A673 (cell line): ENCODE measurements at regions of chr4 and their contacts with region 1.

Region 1: GRCh38 chr4:99949034-99949998 is 759 bp downstream of the H2AZ1 start:
- DNase-seq: peak; percentile 97
- H3K4me3 ChIP-seq: peak overlapping the region; percentile 92
- H3K27ac ChIP-seq: peak overlapping the region; percentile 95
- H3K4me1 ChIP-seq: peaks cover 20% of the 10 kb centered on the region
- H3K27me3 ChIP-seq: no peaks in the 10 kb centered on the region
- CTCF ChIP-seq: peak; percentile 88

Region 2: DNA sequence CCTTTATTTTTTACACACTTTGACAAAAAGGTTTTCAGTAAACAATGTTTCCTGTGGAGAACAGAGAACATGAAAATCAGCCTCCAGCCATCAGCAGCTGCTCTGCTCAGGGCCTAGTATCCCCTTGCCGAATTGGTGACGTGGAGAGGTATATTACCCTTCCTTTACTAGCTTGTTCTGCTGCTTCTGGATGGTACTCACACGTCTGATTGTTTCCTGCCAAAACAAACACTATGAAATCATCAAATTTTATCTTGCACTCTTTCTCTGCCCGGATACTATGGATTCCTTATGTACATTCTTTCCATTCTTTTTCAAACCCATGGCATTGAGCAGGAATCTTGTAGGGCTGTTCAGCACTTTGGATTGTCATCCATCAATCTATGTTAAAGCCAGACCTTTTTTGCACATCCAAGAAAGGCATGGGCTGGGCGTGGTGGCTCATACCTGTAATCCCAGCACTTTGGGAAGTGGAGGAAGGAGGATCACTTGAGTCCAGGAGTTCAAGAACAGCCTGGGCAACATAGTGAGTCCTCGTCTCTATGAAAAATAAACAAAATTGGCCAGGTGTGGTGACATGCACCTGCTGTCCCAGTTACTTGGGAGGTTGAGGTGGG is 972.5 kb before region 1 on chr4:
- CTCF ChIA-PET with region 1: no interaction called
- POLR2A ChIA-PET with region 1: no interaction called
- intact Hi-C with region 1: no loop called
- DNase-seq: no peak
- H3K4me3 ChIP-seq: no peak overlapping the region
- H3K27ac ChIP-seq: no peak overlapping the region
- H3K4me1 ChIP-seq: no peaks in the 10 kb centered on the region
- H3K27me3 ChIP-seq: no peaks in the 10 kb centered on the region
- CTCF ChIP-seq: no peak

Region 3: DNA sequence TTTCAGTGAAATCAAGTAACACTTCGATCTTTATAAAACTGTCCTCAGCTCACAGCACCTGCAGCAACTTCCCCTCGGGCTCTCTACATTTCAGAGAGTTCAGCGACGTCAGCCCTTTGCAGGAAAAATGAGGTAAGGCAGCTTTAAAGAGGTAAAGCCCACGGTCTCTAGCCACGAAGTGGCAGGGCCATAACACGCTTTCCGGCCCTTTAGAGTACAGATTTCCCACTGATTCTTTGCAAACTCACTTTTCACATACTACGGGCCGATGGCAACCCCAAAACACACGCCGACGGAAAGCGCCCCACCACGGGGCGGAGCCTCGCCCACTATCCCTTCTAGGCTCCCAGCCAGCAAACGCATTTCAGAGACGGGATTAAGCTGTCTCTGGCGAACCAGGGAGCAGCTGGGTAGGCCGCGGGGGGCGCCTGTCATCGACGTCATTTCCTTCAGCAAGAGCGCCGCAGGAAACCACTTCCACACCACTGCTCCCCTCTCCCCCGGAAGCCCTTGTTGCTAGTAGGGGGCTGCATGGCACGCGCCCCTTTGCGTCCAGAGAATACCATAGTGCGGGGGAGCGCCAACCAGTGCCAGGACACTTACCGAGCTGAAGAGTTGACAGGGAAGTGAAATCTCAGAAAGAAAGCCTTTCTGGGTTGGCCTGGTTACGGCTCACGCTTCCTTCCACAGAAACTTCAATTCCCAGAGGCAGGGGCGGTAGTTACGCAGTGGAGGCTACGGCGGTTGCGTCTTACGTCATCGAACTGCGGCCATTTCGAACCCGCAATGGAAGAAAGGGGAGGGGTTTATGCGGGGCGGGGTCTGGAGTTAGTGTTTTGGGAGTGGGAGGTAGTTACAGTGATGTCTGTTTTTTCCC is 385.8 kb before region 1 on chr4 and contains the start of gene TRMT10A:
- CTCF ChIA-PET with region 1: no interaction called
- POLR2A ChIA-PET with region 1: no interaction called
- intact Hi-C with region 1: loop called (anchors 5 kb)
- DNase-seq: peak; percentile 98
- H3K4me3 ChIP-seq: peak within 1 kb of the TSS; percentile 65
- H3K27ac ChIP-seq: peak within 1 kb of the TSS; percentile 99
- H3K4me1 ChIP-seq: no peaks in the 10 kb centered on the region
- H3K27me3 ChIP-seq: no peaks in the 10 kb centered on the region
- CTCF ChIP-seq: no peak
- total RNA-seq, gene TRMT10A: 2.4 and 4.6 TPM in 2 replicates

Region 4: DNA sequence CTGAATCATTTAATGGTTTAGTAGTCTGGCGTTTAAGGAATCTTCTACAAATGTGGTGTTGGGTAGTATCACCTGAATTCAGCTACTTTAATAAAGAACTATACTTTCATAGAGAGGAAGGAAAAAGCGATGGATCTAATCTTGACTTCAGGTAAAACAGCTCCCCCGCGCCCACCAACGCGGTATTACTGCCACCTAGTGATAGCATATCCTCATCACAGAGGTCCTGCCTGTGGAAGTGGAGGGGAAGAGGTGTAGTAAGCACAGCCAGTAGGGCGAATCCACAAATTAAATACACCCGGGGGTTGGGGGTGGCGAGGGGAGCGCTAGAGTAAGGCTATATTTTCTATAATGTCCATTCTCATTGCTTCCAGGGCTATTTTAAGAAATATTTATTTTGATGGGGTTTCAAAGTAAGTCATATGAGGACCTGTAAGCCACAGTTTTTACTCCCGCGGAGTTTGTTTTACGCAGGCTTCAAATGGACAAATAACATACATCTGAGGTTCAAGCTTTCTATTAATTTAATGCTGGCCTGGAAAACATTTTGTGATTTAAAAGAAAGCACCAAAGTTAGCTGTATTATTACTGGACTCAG is 141.0 kb before region 1 on chr4:
- CTCF ChIA-PET with region 1: no interaction called
- POLR2A ChIA-PET with region 1: no interaction called
- intact Hi-C with region 1: loop called (anchors 5 kb)
- DNase-seq: peak; percentile 62
- H3K4me3 ChIP-seq: no peak overlapping the region
- H3K27ac ChIP-seq: no peak overlapping the region
- H3K4me1 ChIP-seq: no peaks in the 10 kb centered on the region
- H3K27me3 ChIP-seq: peaks cover 16% of the 10 kb centered on the region
- CTCF ChIP-seq: peak; percentile 73

Region 5: GRCh38 chr4:100494166-100494825 is 545.0 kb after region 1 on chr4:
- CTCF ChIA-PET with region 1: no interaction called
- POLR2A ChIA-PET with region 1: no interaction called
- intact Hi-C with region 1: loop called (anchors 5 kb)
- DNase-seq: no peak
- H3K4me3 ChIP-seq: no peak overlapping the region
- H3K27ac ChIP-seq: peak overlapping the region; percentile 26
- H3K4me1 ChIP-seq: peaks cover 35% of the 10 kb centered on the region
- H3K27me3 ChIP-seq: no peaks in the 10 kb centered on the region
- CTCF ChIP-seq: no peak

Region 6: DNA sequence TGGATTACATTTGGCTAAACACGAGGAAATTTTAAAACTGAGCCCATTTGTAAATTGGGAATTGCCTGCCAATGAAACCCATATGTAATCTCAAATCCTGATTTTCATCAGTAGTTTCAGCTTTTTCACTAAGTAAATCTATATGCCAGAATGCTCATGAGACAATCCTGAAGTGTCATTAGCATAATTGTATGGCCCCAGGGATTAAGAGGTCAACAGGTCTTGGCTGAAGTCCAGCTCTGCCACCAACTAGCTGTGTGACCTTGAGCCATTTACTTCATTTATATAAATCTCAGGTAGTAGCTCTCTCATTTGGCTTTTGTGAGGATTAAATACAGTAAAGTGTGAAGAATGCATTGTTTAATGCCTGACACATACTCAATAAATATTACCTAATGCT is 889.0 kb after region 1 on chr4:
- CTCF ChIA-PET with region 1: no interaction called
- POLR2A ChIA-PET with region 1: no interaction called
- intact Hi-C with region 1: no loop called
- DNase-seq: peak; percentile 53
- H3K4me3 ChIP-seq: no peak overlapping the region
- H3K27ac ChIP-seq: no peak overlapping the region
- H3K4me1 ChIP-seq: peaks cover 4% of the 10 kb centered on the region
- H3K27me3 ChIP-seq: no peaks in the 10 kb centered on the region
- CTCF ChIP-seq: no peak

Region 7: DNA sequence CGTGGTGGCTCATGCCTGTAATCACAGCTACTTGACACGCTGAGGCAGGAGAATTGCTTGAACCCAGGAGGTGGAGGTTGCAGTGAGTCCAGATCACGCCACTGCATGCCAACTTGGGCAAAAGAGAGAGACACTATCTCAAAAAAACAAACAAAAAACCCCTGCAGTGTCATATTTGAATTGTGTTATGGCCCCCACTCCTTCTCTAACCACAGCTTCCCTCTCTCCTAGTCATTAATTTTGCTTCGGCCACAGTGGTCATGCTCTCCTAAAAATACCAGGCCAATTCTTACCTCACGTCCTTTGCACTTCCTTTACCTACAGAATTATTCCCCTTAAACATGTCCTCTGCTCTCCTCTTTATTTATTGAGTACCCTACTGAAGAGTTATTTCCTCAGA is 1191.9 kb after region 1 on chr4:
- CTCF ChIA-PET with region 1: no interaction called
- POLR2A ChIA-PET with region 1: interaction called, 16 read pairs
- intact Hi-C with region 1: no loop called
- DNase-seq: no peak
- H3K4me3 ChIP-seq: no peak overlapping the region
- H3K27ac ChIP-seq: no peak overlapping the region
- H3K4me1 ChIP-seq: peaks cover 29% of the 10 kb centered on the region
- H3K27me3 ChIP-seq: no peaks in the 10 kb centered on the region
- CTCF ChIP-seq: no peak